Prostate gland (tissue), 2 donors: ENCODE measurements at regions of chr19 and their contacts with region 1.

Region 1: DNA sequence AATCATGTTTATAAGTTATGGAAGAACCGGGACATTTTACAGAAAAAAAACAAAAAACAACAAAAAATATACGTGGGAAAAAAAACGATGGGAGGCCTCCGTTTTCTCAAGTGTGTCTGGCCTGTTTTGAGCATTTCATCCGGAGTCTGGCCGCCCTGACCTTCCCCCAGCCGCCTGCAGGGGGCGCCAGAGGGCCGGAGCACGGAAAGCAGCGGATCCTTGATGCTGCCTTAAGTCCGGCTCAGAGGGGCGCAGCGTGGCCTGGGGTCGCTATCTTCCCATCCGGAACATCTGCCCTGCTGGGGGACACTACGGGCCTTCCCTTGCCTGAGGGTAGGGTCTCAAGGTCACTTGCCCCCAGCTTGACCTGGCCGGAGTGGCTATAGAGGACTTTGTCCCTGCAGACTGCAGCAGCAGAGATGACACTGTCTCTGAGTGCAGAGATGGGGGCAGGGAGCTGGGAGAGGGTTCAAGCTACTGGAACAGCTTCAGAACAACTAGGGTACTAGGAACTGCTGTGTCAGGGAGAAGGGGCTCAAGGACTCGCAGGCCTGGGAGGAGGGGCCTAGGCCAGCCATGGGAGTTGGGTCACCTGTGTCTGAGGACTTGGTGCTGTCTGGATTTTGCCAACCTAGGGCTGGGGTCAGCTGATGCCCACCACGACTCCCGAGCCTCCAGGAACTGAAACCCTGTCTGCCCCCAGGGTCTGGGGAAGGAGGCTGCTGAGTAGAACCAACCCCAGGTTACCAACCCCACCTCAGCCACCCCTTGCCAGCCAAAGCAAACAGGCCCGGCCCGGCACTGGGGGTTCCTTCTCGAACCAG is 1.8 kb upstream of the APOE start:
- DNase-seq: peak; percentile 42
- H3K4me3 ChIP-seq: no peak overlapping the region
- H3K27ac ChIP-seq: no peak overlapping the region
- H3K4me1 ChIP-seq: no peaks in the 10 kb centered on the region
- H3K27me3 ChIP-seq: peaks cover 5% of the 10 kb centered on the region
- CTCF ChIP-seq: peak; percentile 94 to 95 (median 94)
- POLR2A ChIP-seq: no peak

Region 2: DNA sequence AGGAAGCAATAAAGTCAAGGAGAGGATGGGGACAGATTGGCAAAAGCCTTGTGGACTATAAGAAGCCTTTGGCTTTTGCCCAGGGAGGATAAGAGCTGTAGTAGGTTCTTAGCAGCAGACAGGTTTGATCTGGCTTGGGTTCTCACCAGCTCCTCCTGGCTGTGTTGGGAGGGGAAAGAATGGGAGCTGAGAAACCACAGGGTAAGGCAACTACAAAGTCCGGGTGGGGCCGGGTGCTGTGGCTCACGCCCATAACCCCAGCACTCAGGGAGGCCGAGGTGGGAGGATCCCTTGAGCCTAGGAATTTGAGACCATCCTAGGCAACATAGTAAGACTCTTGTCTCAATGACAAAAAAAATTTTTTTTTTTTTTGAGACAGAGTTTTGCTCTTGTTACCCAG is 37.1 kb before region 1 on chr19:
- intact Hi-C with region 1: no loop called
- DNase-seq: no peak
- H3K4me3 ChIP-seq: no peak overlapping the region
- H3K27ac ChIP-seq: no peak overlapping the region
- H3K4me1 ChIP-seq: no peaks in the 10 kb centered on the region
- H3K27me3 ChIP-seq: no peaks in the 10 kb centered on the region
- CTCF ChIP-seq: no peak
- POLR2A ChIP-seq: no peak

Region 3: GRCh38 chr19:44954824-44955586 is 51.2 kb after region 1 on chr19 and contains the start of gene CLPTM1:
- intact Hi-C with region 1: loop called (anchors 2 kb)
- DNase-seq: peak; percentile 95
- H3K4me3 ChIP-seq: peak within 1 kb of the TSS; percentile 85 to 99
- H3K27ac ChIP-seq: peak within 1 kb of the TSS; percentile 95 to 97
- H3K4me1 ChIP-seq: peaks cover 7% of the 10 kb centered on the region
- H3K27me3 ChIP-seq: no peaks in the 10 kb centered on the region
- CTCF ChIP-seq: peak in 1 of 4 experiments; percentile 29
- POLR2A ChIP-seq: peak; percentile 65
- total RNA-seq, gene CLPTM1: 102 to 185 TPM

Region 4: GRCh38 chr19:45059278-45059965 is 155.6 kb after region 1 on chr19:
- intact Hi-C with region 1: loop called (anchors 10 kb)
- DNase-seq: peak; percentile 79
- H3K4me3 ChIP-seq: no peak overlapping the region
- H3K27ac ChIP-seq: no peak overlapping the region
- H3K4me1 ChIP-seq: no peaks in the 10 kb centered on the region
- H3K27me3 ChIP-seq: no peaks in the 10 kb centered on the region
- CTCF ChIP-seq: peak; percentile 76 to 91 (median 85)
- POLR2A ChIP-seq: no peak